ENCODE measurements at regions of chr15 and their contacts with region 1.

Region 1: GRCh38 chr15:44968475-44968874 is 12.0 kb downstream of the TERB2 start:
- DNase-seq: no peak
- ATAC-seq: no peak

Region 2: DNA sequence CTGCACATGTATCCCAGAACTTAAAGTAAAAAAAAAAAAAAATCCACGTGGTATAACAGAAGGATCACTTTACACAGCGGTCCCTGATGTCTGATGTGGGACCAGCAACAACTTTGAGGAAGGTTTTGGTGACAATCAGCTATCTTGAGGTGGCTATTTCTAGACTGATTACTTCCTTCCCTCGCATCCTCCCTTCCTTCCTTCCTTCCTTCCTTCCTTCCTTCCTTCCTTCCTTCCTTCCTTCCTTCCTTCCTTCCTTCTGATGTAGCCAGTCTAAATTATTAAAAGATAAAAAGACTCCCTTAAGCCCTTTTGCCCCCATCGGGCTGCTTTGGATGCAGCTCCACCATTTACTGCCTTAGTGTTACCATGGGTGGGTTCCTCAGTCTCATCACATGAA is 69.5 kb after region 1 on chr15:
- intact Hi-C with region 1: loop called in 1 of 2 experiments (anchors 5 kb)
- DNase-seq: no peak
- ATAC-seq: no peak

Region 3: DNA sequence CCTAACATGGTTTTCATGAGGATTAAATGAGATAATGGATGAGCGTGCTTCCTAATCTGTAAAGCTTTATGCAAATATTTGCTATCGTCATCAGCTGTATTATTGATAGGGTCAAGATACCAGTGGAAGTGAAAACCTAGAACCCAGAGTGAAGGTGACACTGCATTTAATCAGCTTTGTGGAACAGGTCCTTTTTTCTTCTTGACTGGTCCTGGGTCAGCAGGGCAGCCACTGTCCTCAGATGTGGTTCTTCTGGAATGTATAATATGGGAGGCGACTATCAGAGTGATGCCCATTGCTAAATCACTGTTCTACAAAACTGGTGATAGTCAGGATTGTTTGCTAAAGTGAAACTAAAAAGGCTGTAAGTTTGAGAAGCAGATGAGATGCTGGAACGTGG is 95.9 kb after region 1 on chr15:
- intact Hi-C with region 1: no loop called
- DNase-seq: no peak
- ATAC-seq: no peak